Activated CD4-positive, alpha-beta T cell treated with anti-CD3 and anti-CD28 coated beads, Interleukin-2, amount 10 ng/mL, durations not matched to agents 24 days and 14 days (primary cell): ENCODE measurements at regions of chr13 and their contacts with region 1.

Region 1: GRCh38 chr13:101942038-101942437 is 459.8 kb downstream of the FGF14 start:
- DNase-seq: peak; percentile 57
- H3K4me3 Mint-ChIP-seq: no peak overlapping the region
- H3K27ac Mint-ChIP-seq: no peak overlapping the region
- H3K4me1 Mint-ChIP-seq: no peaks in the 10 kb centered on the region
- H3K27me3 Mint-ChIP-seq: no peaks in the 10 kb centered on the region

Region 2: GRCh38 chr13:101144808-101145419 is 797.1 kb before region 1 on chr13:
- intact Hi-C with region 1: loop called (anchors 10 kb)
- DNase-seq: peak; percentile 74
- H3K4me3 Mint-ChIP-seq: no peak overlapping the region
- H3K27ac Mint-ChIP-seq: no peak overlapping the region
- H3K4me1 Mint-ChIP-seq: no peaks in the 10 kb centered on the region
- H3K27me3 Mint-ChIP-seq: peaks cover 3% of the 10 kb centered on the region

Region 3: GRCh38 chr13:101896541-101896940 is 45.5 kb before region 1 on chr13:
- intact Hi-C with region 1: no loop called
- DNase-seq: no peak
- H3K4me3 Mint-ChIP-seq: no peak overlapping the region
- H3K27ac Mint-ChIP-seq: no peak overlapping the region
- H3K4me1 Mint-ChIP-seq: no peaks in the 10 kb centered on the region
- H3K27me3 Mint-ChIP-seq: no peaks in the 10 kb centered on the region

Region 4: GRCh38 chr13:101959016-101959415 is 17.0 kb after region 1 on chr13:
- intact Hi-C with region 1: loop called (anchors 1 kb)
- DNase-seq: no peak
- H3K4me3 Mint-ChIP-seq: no peak overlapping the region
- H3K27ac Mint-ChIP-seq: no peak overlapping the region
- H3K4me1 Mint-ChIP-seq: no peaks in the 10 kb centered on the region
- H3K27me3 Mint-ChIP-seq: no peaks in the 10 kb centered on the region

Region 5: DNA sequence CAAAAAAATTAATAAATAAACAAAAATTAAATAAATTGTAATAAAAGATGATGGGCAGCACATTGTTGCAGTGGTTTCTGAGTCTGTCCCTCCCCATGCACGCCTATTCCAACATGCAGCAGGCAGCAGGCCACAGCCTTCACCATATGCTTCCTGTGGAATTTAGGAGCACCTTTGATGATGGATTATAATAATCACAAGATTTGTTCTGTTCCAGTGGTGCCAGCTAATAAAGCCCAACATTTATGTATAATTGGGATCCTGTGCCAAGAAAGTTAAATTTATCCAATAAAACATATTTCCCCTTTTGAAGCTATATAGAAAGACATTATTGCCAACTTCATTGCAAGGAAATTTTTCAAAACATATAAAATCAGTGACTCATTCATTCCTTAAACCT is 131.2 kb after region 1 on chr13:
- intact Hi-C with region 1: no loop called
- DNase-seq: no peak
- H3K4me3 Mint-ChIP-seq: no peak overlapping the region
- H3K27ac Mint-ChIP-seq: no peak overlapping the region
- H3K4me1 Mint-ChIP-seq: no peaks in the 10 kb centered on the region
- H3K27me3 Mint-ChIP-seq: no peaks in the 10 kb centered on the region

Region 6: DNA sequence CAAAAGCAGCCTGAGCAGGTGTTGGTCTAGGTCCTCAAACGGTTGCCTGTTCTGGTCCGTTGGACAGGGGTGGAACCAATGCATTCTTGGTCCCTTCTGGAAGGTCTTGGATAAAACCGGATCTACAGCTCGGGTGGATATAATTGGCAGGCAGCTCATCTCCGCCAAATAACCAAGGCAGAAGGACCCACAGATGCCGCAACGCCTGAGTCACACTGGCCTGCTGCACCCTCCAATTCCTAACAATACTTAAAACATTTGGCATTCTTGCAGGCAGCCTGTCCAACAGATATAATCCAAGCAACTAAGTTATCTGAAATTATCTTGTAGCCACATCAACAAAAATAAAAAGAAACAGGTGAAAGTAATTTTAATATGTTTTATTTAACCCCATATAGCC is 518.8 kb after region 1 on chr13:
- intact Hi-C with region 1: loop called (anchors 5 kb)
- DNase-seq: no peak
- H3K4me3 Mint-ChIP-seq: no peak overlapping the region
- H3K27ac Mint-ChIP-seq: no peak overlapping the region
- H3K4me1 Mint-ChIP-seq: peaks cover 5% of the 10 kb centered on the region
- H3K27me3 Mint-ChIP-seq: peaks cover 8% of the 10 kb centered on the region

Region 7: DNA sequence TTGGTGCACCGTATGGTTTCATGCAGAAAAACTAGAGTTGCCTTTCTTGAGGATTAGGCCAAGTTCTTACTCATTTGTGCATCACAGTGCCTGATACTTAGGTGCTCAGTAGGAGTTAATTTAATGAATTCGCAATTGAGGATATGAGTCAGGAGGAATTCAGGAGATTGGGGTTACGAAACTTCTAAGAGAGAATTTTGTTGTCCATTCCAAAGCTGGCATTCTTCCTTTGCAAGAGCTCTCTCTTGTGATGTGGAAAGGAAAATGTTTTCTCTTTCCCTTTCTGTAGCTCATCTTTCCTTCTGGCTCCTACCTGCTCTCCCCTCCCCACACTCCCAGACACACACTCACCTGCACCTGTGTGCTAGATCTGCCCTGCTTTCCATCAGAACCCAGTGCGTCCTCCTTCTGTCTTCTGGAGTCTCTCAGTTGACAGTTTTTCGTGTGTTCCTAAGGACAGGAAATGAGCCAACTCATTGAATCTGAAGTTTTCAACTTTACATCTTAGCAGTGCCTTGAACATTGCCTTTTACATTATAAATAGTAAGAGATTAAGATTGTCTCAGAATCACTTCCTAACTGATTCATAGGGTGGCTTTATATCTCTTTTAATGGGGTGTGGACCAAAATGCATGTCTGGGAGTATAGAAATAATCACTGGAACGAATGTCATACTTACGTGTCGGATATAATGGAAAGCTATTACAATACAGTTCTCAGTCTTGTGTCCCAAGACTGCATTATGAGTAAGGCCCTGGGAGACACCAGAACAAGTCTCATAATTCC is 884.1 kb after region 1 on chr13:
- intact Hi-C with region 1: no loop called
- DNase-seq: no peak
- H3K4me3 Mint-ChIP-seq: no peak overlapping the region
- H3K27ac Mint-ChIP-seq: no peak overlapping the region
- H3K4me1 Mint-ChIP-seq: no peaks in the 10 kb centered on the region
- H3K27me3 Mint-ChIP-seq: no peaks in the 10 kb centered on the region